GM12878 (cell line): ENCODE measurements at regions of chr6 and their contacts with region 1.

Region 1: GRCh38 chr6:96521644-96522464 is at the start of gene UFL1:
- DNase-seq: peak; percentile 68
- ATAC-seq: peak; percentile 94
- H3K4me3 ChIP-seq: peak within 1 kb of the TSS; percentile 91
- H3K27ac ChIP-seq: peak within 1 kb of the TSS; percentile 96
- H3K4me1 ChIP-seq: no peaks in the 10 kb centered on the region
- H3K27me3 ChIP-seq: no peaks in the 10 kb centered on the region
- CTCF ChIP-seq: no peak
- EP300 ChIP-seq: 0 out of 4 replicates have a peak, but pooled peaks of 1 of the 2 experiments have one; percentile 39
- POLR2A ChIP-seq: peak; percentile 100
- RAD21 ChIP-seq: no peak
- polyA plus RNA-seq, gene UFL1: 24.5 to 29.1 TPM

Region 2: GRCh38 chr6:95577304-95578105 is 944.3 kb before region 1 on chr6 and contains the start of gene MANEA:
- CTCF ChIA-PET with region 1: no interaction called
- POLR2A ChIA-PET with region 1: no interaction called
- RAD21 ChIA-PET with region 1: no interaction called
- SMC1A ChIA-PET with region 1: no interaction called
- in situ Hi-C with region 1: loop called (anchors 10 kb)
- intact Hi-C with region 1: loop called (anchors 5 kb)
- DNase-seq: peak; percentile 46
- ATAC-seq: peak; percentile 88
- H3K4me3 ChIP-seq: peak within 1 kb of the TSS; percentile 92
- H3K27ac ChIP-seq: peak within 1 kb of the TSS; percentile 93
- H3K4me1 ChIP-seq: no peaks in the 10 kb centered on the region; the same call in 1 of the 2 replicates
- H3K27me3 ChIP-seq: no peaks in the 10 kb centered on the region
- CTCF ChIP-seq: no peak
- EP300 ChIP-seq: no peak
- POLR2A ChIP-seq: peak; percentile 87
- RAD21 ChIP-seq: no peak
- polyA plus RNA-seq, gene MANEA: 5.8 to 6.4 TPM

Region 3: DNA sequence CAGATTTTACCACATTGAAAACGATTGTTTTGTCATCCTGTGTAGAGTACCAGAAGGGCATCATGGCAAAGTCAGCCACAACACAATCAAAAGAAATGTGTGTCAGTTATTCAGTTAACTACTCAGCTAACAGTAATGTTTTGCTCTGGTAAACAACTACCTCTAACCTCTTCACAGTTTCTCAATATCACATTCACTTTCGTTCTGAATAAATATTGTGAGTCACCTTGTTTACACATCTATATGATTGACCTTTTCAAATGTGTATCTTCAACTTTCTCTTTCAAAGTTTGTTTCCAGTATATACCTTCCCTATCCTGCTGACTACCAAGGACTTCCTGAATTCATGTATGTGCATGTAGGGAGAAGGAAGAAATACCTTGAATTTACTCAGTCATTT is 216.9 kb before region 1 on chr6:
- CTCF ChIA-PET with region 1: no interaction called
- POLR2A ChIA-PET with region 1: no interaction called
- RAD21 ChIA-PET with region 1: no interaction called
- SMC1A ChIA-PET with region 1: no interaction called
- in situ Hi-C with region 1: no loop called
- intact Hi-C with region 1: no loop called
- DNase-seq: peak; percentile 12
- ATAC-seq: peak; percentile 98
- H3K4me3 ChIP-seq: no peak overlapping the region
- H3K27ac ChIP-seq: no peak overlapping the region
- H3K4me1 ChIP-seq: no peaks in the 10 kb centered on the region
- H3K27me3 ChIP-seq: no peaks in the 10 kb centered on the region
- CTCF ChIP-seq: no peak
- EP300 ChIP-seq: peak in 1 of 2 experiments; percentile 57; a peak in 1 of 4 replicates
- POLR2A ChIP-seq: no peak
- RAD21 ChIP-seq: no peak

Region 4: DNA sequence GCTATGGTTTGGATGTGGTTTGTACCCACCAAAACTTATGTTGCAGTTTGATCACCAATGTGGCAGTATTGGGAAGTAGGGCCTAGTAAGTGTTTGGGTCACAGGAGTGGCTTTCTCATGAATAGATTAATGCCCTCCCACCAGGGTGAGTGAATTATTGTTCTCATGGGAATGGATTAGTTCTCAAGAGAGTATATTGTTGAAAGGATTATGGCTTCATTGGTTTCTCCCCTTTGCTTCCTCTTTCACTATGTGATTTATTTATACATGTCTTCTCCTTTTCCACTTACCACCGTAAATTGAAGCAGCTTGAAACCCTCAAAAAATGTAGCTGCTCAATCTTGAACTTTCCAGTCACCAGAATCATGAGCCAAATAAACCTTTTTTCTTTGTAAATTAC is 10.5 kb after region 1 on chr6:
- CTCF ChIA-PET with region 1: interaction called, 5 read pairs
- POLR2A ChIA-PET with region 1: no interaction called
- RAD21 ChIA-PET with region 1: interaction called, 5 read pairs
- SMC1A ChIA-PET with region 1: interaction called, 14 read pairs
- in situ Hi-C with region 1: no loop called
- intact Hi-C with region 1: no loop called
- DNase-seq: peak; percentile 41
- ATAC-seq: peak; percentile 61
- H3K4me3 ChIP-seq: no peak overlapping the region
- H3K27ac ChIP-seq: peak overlapping the region; percentile 50
- H3K4me1 ChIP-seq: no peaks in the 10 kb centered on the region; the same call in 1 of the 2 replicates
- H3K27me3 ChIP-seq: no peaks in the 10 kb centered on the region
- CTCF ChIP-seq: no peak
- EP300 ChIP-seq: no peak
- POLR2A ChIP-seq: no peak
- RAD21 ChIP-seq: no peak

Region 5: DNA sequence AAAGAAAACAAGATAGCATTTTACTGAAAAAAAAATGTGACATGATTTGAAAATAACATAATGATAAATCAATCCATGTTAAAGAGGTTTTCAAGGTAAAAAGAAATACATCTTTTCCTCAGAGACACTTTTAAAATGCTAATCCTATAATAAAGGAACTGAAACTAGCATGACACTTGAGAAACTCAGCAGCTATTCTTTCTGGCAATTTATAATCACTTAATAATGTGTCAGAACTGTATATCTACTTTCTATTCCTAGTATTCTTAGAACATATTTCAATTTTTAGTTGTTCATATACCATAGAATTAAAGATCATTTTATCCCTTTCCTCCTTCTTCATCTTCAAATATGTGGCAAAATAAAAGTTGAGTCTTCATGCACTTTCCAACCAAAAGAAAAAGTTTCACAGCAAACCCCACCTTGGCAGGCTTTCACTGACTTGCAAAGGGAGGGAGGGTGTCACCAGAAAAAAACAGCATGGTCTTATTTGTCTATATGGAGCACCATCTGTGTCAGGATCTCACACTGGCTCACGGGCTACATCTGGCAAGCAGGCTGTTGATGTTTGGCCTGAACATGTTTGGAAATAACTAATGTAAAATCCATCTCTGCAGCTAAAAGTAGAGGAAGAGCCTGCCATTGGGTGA is 89.6 kb after region 1 on chr6:
- CTCF ChIA-PET with region 1: interaction called, 5 read pairs
- POLR2A ChIA-PET with region 1: no interaction called
- RAD21 ChIA-PET with region 1: interaction called, 3 read pairs
- SMC1A ChIA-PET with region 1: interaction called, 3 read pairs
- in situ Hi-C with region 1: no loop called
- intact Hi-C with region 1: loop called (anchors 5 kb)
- DNase-seq: no peak
- ATAC-seq: peak; percentile 86
- H3K4me3 ChIP-seq: no peak overlapping the region
- H3K27ac ChIP-seq: 0 out of 2 replicates have a peak overlapping the region, but pooled peaks have one; percentile 4
- H3K4me1 ChIP-seq: peaks cover 34% of the 10 kb centered on the region
- H3K27me3 ChIP-seq: no peaks in the 10 kb centered on the region
- CTCF ChIP-seq: no peak
- EP300 ChIP-seq: peak; percentile 75 to 88; a peak in 3 of 4 replicates
- POLR2A ChIP-seq: no peak
- RAD21 ChIP-seq: no peak

Region 6: GRCh38 chr6:96837081-96837971 is 315.5 kb after region 1 on chr6 and contains the start of gene GPR63:
- CTCF ChIA-PET with region 1: interaction called, 3 read pairs
- POLR2A ChIA-PET with region 1: no interaction called
- RAD21 ChIA-PET with region 1: no interaction called
- SMC1A ChIA-PET with region 1: no interaction called
- in situ Hi-C with region 1: no loop called
- intact Hi-C with region 1: loop called (anchors 2 kb)
- DNase-seq: peak; percentile 50
- ATAC-seq: peak; percentile 92
- H3K4me3 ChIP-seq: peak within 1 kb of the TSS; percentile 92
- H3K27ac ChIP-seq: peak within 1 kb of the TSS; percentile 62
- H3K4me1 ChIP-seq: no peaks in the 10 kb centered on the region; the same call in 1 of the 2 replicates
- H3K27me3 ChIP-seq: no peaks in the 10 kb centered on the region; a peak in 1 of 4 replicates
- CTCF ChIP-seq: 0 out of 6 replicates have a peak, but pooled peaks of 1 of the 3 experiments have one; percentile 5
- EP300 ChIP-seq: no peak; a peak in 1 of 4 replicates
- POLR2A ChIP-seq: peak; percentile 86
- RAD21 ChIP-seq: no peak
- polyA plus RNA-seq, gene GPR63: 1.6 to 1.7 TPM